ENCODE measurements at regions of chr1 and their contacts with region 1.

Region 1: DNA sequence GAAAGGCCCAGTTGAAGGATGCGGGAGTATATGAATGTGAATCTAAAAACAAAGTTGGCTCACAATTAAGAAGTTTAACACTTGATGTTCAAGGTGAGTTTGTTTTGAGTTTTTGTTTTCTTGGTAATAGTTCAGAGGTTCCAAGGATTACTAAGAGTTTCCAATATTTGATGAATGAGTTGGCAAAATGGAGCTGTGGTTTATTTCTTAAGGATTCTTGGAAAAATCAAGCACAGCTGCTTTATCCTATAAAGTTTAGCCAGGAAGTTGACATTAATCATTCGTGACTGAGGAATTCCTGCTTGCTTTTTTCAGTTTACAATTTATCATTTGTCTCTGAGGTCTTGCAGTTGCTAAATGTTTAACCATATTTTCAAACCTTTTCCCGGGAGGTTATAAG is 15.1 kb downstream of the VCAM1 start:
- DNase-seq: no peak
- ATAC-seq: peak; percentile 36
- H3K4me3 ChIP-seq: no peak overlapping the region
- H3K27ac ChIP-seq: no peak overlapping the region
- H3K4me1 ChIP-seq: peaks cover 0 to 1% of the 10 kb centered on the region in 2 donors
- H3K27me3 ChIP-seq: no peaks in the 10 kb centered on the region

Region 2: DNA sequence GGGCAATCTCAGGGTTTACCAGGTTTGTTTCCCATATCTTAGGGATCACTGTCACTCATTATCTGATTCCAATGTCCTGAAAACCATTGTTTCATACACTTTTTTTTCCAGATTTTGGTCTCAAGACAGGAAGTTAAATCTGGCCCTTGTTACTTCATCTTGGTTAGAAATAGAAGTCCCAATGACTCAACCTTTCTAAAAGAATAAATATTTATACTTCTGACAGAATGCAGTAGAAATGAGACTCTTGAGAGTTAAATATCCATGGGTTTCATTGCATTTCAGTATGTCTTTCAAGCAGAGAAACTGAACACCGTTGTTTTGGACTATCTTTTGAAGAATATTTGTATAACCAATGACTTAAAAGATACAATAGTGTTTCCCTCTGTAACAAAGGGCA is 34.9 kb before region 1 on chr1:
- intact Hi-C with region 1: loop called in 1 of 2 experiments (anchors 5 kb)
- DNase-seq: no peak
- ATAC-seq: no peak
- H3K4me3 ChIP-seq: no peak overlapping the region
- H3K27ac ChIP-seq: peak overlapping the region; percentile 33 to 67
- H3K4me1 ChIP-seq: peaks cover 6 to 11% of the 10 kb centered on the region in 2 donors
- H3K27me3 ChIP-seq: no peaks in the 10 kb centered on the region

Region 3: GRCh38 chr1:100760511-100760910 is 25.8 kb after region 1 on chr1:
- intact Hi-C with region 1: no loop called
- DNase-seq: no peak
- ATAC-seq: no peak
- H3K4me3 ChIP-seq: no peak overlapping the region
- H3K27ac ChIP-seq: no peak overlapping the region
- H3K4me1 ChIP-seq: no peaks in the 10 kb centered on the region
- H3K27me3 ChIP-seq: no peaks in the 10 kb centered on the region